Psoas muscle (tissue), 8 donors: ENCODE measurements at regions of chr1 and their contacts with region 1.

Region 1: GRCh38 chr1:241640029-241640818 is at the starts of genes CHML and OPN3:
- DNase-seq: peak; percentile 95 to 96
- ATAC-seq: peak; percentile 99 to 100 (median 99)
- H3K4me3 ChIP-seq: peak within 1 kb of the TSS; percentile 85
- H3K27ac ChIP-seq: peak within 1 kb of the TSS; percentile 77
- H3K4me1 ChIP-seq: peaks cover 8% of the 10 kb centered on the region
- H3K27me3 ChIP-seq: no peaks in the 10 kb centered on the region
- CTCF ChIP-seq: no peak
- total RNA-seq, gene CHML: 3.5 to 10.7 (median 5.4) TPM
- total RNA-seq, gene OPN3: 1.7 to 4.7 (median 3.8) TPM

Region 2: DNA sequence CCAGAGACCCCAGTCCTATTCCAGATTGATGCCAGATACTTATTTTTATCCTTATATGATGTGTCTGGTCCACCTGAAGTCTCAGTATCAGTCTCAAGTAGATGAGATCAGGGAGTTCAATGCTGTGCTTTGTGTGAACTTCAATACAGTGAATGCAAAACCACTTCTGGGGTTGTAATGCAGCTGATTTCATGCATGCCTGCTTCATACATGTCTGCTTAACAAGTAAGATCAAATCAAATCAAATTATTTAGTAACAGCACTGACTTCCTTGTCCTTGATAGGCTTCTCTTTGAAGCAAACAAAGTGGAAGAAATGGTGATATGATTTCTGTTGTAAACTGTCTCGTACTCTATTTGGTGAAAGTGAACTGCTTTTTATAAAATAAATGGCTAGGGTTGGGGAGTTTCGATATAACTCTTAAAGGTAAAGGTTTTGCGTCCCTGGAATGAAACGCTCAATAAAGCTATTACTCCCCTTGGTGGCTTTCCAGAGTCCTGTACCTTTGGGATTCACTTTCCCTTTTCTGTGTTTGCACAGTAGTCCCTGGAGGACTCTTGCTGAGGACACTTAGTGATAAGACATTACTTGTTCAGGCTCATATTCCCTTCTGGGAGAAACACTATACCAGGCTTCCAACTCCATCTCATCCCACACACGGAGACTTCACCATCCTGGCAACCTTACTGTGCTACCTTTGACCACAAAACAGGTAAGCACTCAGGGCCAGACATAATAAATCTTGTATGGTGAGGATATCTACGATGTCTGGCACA is 179.9 kb before region 1 on chr1:
- intact Hi-C with region 1: no loop called
- DNase-seq: no peak
- ATAC-seq: no peak
- H3K4me3 ChIP-seq: no peak overlapping the region
- H3K27ac ChIP-seq: no peak overlapping the region
- H3K4me1 ChIP-seq: no peaks in the 10 kb centered on the region
- H3K27me3 ChIP-seq: no peaks in the 10 kb centered on the region
- CTCF ChIP-seq: no peak

Region 3: GRCh38 chr1:241519308-241520079 is 120.7 kb before region 1 on chr1 and contains the start of gene FH:
- intact Hi-C with region 1: loop called in 1 of 2 experiments (anchors 5 kb)
- DNase-seq: peak; percentile 95 to 96
- ATAC-seq: peak; percentile 99
- H3K4me3 ChIP-seq: peak within 1 kb of the TSS; percentile 92
- H3K27ac ChIP-seq: peak within 1 kb of the TSS; percentile 87
- H3K4me1 ChIP-seq: peaks cover 23% of the 10 kb centered on the region
- H3K27me3 ChIP-seq: peaks cover 0 to 3% (median 0%) of the 10 kb centered on the region in 3 donors
- CTCF ChIP-seq: no peak
- total RNA-seq, gene FH: 111 to 164 (median 140) TPM